PC-9 (cell line): ENCODE measurements at regions of chr12 and their contacts with region 1.

Region 1: DNA sequence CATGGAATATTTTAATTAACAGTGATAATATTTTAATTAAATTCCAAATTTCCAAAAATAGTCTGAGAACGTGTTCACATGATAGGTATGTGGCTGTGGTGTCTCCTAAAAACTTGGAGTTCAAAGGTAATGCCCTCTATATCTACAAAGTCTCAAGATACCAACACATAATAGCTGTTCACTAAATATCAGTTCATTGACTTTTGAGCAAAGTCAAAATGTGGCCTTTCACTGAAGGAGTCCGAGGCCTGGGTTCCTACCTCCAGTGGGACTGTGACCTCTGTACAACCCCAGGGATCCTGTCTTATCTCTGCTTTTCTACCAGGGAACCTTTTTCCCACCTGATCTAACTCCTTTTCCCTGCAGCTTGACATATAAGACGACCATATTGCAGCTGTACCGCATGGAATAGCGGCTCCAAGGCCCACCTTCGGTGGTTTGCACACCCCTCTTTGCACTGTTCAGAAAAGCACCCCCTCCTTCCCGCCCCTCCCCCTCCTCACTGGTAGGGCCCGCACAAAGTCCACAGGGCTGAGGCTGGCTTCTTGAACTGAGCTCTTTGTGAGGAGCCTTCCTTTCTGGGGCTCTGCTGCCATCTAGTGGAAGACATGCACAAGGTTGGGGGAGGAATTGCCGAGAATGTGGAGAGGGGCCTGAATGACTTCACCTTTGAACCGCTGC is 3.1 kb downstream of the CCND2 start:
- DNase-seq: peak; percentile 57 to 73
- H3K4me3 ChIP-seq: no peak overlapping the region
- H3K27ac ChIP-seq: no peak overlapping the region
- H3K4me1 ChIP-seq: no peaks in the 10 kb centered on the region
- H3K27me3 ChIP-seq: peaks cover 89% of the 10 kb centered on the region
- CTCF ChIP-seq: peak; percentile 98

Region 2: GRCh38 chr12:3135522-3136461 is 1140.9 kb before region 1 on chr12:
- CTCF ChIA-PET with region 1: no interaction called
- POLR2A ChIA-PET with region 1: no interaction called
- intact Hi-C with region 1: loop called (anchors 10 kb)
- DNase-seq: peak; percentile 62
- H3K4me3 ChIP-seq: no peak overlapping the region
- H3K27ac ChIP-seq: no peak overlapping the region
- H3K4me1 ChIP-seq: no peaks in the 10 kb centered on the region
- H3K27me3 ChIP-seq: no peaks in the 10 kb centered on the region
- CTCF ChIP-seq: peak; percentile 93

Region 3: DNA sequence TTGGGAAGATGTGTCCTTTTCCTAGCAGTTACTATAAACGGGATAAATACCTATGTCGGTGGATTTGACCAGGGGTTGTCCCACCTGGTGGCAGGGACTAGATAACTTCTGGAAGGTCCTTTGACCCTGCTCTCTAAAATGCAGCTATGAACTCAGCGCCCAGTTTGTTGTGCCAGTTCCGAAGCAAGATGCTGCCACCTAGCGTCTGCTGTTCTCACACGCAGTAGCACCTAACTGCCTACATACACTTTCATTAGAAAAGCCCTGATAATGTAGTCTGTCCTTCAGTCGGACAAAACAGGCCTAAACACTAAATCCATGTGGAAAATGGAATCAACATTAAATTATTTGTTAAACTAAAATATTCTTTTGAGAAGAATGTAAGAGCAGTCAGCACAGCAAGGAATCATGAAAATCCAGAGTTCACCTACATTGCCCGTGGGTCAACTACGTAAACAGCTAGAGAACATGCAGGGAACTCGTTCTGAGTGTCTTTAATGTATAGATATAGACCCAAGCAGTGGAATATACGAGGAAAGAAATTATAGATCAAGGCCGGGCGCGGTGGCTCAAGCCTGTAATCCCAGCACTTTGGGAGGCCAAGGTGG is 472.7 kb before region 1 on chr12:
- CTCF ChIA-PET with region 1: interaction called, 3 read pairs
- POLR2A ChIA-PET with region 1: no interaction called
- intact Hi-C with region 1: loop called (anchors 10 kb)
- DNase-seq: peak; percentile 52 to 64
- H3K4me3 ChIP-seq: no peak overlapping the region
- H3K27ac ChIP-seq: no peak overlapping the region
- H3K4me1 ChIP-seq: no peaks in the 10 kb centered on the region
- H3K27me3 ChIP-seq: peaks cover 53% of the 10 kb centered on the region
- CTCF ChIP-seq: peak; percentile 94

Region 4: GRCh38 chr12:3996348-3996747 is 280.3 kb before region 1 on chr12:
- CTCF ChIA-PET with region 1: interaction called, 3 read pairs
- POLR2A ChIA-PET with region 1: no interaction called
- intact Hi-C with region 1: loop called (anchors 2 kb)
- DNase-seq: no peak
- H3K4me3 ChIP-seq: no peak overlapping the region
- H3K27ac ChIP-seq: no peak overlapping the region
- H3K4me1 ChIP-seq: no peaks in the 10 kb centered on the region
- H3K27me3 ChIP-seq: peaks cover 32% of the 10 kb centered on the region
- CTCF ChIP-seq: no peak

Region 5: GRCh38 chr12:4056910-4057845 is 219.5 kb before region 1 on chr12:
- CTCF ChIA-PET with region 1: no interaction called
- POLR2A ChIA-PET with region 1: no interaction called
- intact Hi-C with region 1: no loop called
- DNase-seq: no peak
- H3K4me3 ChIP-seq: no peak overlapping the region
- H3K27ac ChIP-seq: no peak overlapping the region
- H3K4me1 ChIP-seq: no peaks in the 10 kb centered on the region
- H3K27me3 ChIP-seq: peaks cover 32% of the 10 kb centered on the region; the same call in 1 of the 2 replicates
- CTCF ChIP-seq: no peak

Region 6: GRCh38 chr12:4221258-4221620 is 55.4 kb before region 1 on chr12:
- CTCF ChIA-PET with region 1: no interaction called
- POLR2A ChIA-PET with region 1: no interaction called
- intact Hi-C with region 1: no loop called
- DNase-seq: no peak
- H3K4me3 ChIP-seq: no peak overlapping the region
- H3K27ac ChIP-seq: no peak overlapping the region
- H3K4me1 ChIP-seq: no peaks in the 10 kb centered on the region
- H3K27me3 ChIP-seq: peaks cover 52% of the 10 kb centered on the region
- CTCF ChIP-seq: no peak